A549 (cell line): ENCODE measurements at regions of chr19 and their contacts with region 1.

Region 1: DNA sequence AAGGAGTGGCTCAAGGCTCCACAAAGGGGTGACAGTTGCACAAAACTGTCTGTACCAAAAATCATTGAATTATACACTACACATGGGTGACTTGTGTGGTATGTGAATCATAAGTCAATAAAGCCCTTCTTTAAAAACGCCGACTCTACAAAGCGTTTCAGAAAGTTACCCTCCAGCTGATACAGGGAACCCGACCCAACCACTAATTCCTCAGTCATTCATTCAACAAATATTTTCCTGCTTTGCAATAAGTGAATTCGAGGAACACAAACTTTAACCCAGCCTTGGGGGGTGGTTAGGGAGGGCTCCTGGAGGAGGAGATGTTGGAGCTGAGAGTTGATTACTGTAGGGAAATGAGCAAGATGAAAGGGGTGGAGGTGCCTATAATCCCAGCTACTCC is 32.0 kb downstream of the LTBP4 start:
- DNase-seq: no peak
- ATAC-seq: 0 out of 6 replicates have a peak, but pooled peaks of 1 of the 2 experiments have one; percentile 21
- H3K4me3 ChIP-seq: no peak overlapping the region
- H3K27ac ChIP-seq: no peak overlapping the region
- H3K4me1 ChIP-seq: peaks cover 7% of the 10 kb centered on the region
- CTCF ChIP-seq: no peak
- EP300 ChIP-seq: no peak
- POLR2A ChIP-seq: no peak
- RAD21 ChIP-seq: no peak

Region 2: DNA sequence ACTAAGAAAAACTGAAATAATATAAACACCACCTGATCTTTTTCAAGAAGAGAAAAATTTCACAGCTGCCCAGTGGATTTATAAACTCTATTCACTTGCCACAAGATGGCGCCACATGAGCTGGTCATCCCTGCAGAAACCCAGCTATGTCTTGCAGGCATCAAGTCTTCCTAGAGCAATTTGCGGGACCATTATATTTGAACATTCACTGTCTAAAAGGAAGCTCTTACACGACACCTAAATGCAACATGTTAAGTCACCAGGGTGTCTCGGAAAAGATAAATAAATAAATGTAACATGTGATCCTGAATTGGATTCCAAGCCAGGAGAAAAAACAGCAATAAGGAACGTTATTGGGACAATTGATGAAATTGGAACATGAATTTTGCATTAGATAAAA is 327.8 kb before region 1 on chr19:
- CTCF ChIA-PET with region 1: interaction called, 32 read pairs
- POLR2A ChIA-PET with region 1: no interaction called
- DNase-seq: peak; percentile 96 to 99
- ATAC-seq: peak; percentile 94 to 96
- H3K4me3 ChIP-seq: no peak overlapping the region
- H3K27ac ChIP-seq: no peak overlapping the region
- H3K4me1 ChIP-seq: no peaks in the 10 kb centered on the region
- CTCF ChIP-seq: peak; percentile 100
- EP300 ChIP-seq: no peak
- POLR2A ChIP-seq: no peak
- RAD21 ChIP-seq: peak; percentile 95 to 98

Region 3: GRCh38 chr19:40497214-40497613 is 136.0 kb before region 1 on chr19:
- CTCF ChIA-PET with region 1: interaction called, 16 read pairs
- POLR2A ChIA-PET with region 1: no interaction called
- DNase-seq: no peak
- ATAC-seq: no peak; a peak in 1 of 6 replicates
- H3K4me3 ChIP-seq: no peak overlapping the region
- H3K27ac ChIP-seq: no peak overlapping the region
- H3K4me1 ChIP-seq: no peaks in the 10 kb centered on the region
- CTCF ChIP-seq: no peak
- EP300 ChIP-seq: no peak
- POLR2A ChIP-seq: no peak
- RAD21 ChIP-seq: no peak

Region 4: DNA sequence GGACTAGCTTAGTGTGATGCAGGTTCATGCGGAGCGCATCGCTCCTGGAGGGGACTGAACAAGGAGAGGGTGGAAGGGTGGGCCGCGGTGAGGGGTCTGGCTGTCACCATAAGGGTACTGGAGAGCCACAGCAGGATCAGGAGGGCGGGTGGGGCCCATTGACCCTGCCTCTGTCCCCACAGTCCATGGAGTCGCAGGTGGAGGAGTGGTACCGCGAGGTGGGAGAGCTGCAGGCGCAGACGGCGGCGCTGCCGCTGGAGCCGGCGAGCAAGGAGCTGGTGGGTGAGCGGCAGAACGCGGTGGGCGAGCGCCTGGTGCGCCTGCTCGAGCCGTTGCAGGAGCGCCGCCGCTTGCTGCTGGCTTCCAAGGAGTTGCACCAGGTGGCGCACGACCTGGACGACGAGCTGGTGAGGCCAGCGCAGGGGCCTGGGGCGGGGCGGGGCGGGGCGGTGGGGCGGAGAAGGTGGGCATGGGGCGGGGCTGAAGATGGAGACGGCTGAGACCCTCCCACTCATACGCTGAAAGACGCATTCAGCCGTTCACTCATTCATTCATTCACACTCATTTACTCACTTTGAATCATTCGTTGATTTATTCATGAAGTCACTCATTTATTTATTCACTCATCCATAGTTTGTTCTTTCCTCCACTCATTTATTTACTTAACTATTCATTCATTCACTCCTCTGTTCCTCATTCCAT is 84.0 kb before region 1 on chr19:
- CTCF ChIA-PET with region 1: interaction called, 109 read pairs
- POLR2A ChIA-PET with region 1: no interaction called
- DNase-seq: peak; percentile 92
- ATAC-seq: peak; percentile 97 to 99
- H3K4me3 ChIP-seq: peak overlapping the region; percentile 33
- H3K27ac ChIP-seq: peak overlapping the region; percentile 49 to 68; a peak in 4 of 6 replicates
- H3K4me1 ChIP-seq: peaks cover 5% of the 10 kb centered on the region
- CTCF ChIP-seq: peak; percentile 85
- EP300 ChIP-seq: no peak; a peak in 1 of 5 replicates
- POLR2A ChIP-seq: no peak
- RAD21 ChIP-seq: peak; percentile 63 to 90

Region 5: DNA sequence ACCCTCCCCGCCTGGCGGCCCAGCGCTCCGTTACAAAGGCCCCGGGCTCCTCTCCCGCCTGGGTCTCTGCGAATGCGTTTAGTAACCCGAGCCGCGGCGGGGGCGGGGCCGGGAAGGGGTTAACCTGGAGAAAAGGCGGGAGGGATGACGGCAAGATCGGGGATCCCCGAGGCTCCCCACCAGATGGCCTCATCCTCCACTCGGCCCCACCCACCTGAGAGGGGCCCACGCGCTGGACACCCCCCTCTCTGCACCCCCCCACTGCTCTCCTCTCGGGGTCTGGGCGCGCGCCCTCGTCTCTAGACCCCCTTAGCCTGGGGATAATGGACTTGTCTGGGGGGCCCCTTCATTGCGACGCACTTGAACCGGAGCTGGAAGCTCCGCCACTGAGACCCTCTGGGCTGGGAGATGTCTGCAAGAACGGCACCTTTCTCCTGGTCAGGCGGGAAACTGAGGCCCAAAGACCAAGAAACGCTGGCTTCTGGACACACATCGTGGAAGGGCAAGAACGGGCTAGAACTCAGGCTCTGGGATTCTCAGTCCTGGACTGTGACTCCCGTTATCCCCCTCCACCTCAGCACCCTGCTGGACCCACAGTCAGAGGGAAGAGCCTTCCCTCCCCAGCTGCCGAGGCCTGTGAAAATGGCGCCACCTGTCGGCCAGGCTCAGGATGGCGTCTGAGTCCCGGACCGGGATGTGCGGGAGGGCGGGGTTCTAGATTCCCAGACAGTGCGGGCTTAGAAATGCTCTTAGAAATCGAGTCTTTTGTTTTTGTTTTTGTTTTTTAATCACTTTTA is 34.9 kb before region 1 on chr19:
- CTCF ChIA-PET with region 1: interaction called, 409 read pairs
- POLR2A ChIA-PET with region 1: no interaction called
- DNase-seq: peak; percentile 97 to 99
- ATAC-seq: peak; percentile 49 to 76
- H3K4me3 ChIP-seq: peak overlapping the region; percentile 47
- H3K27ac ChIP-seq: peak overlapping the region; percentile 66 to 85
- H3K4me1 ChIP-seq: peaks cover 56% of the 10 kb centered on the region
- CTCF ChIP-seq: peak; percentile 100
- EP300 ChIP-seq: no peak
- POLR2A ChIP-seq: 0 out of 2 replicates have a peak, but pooled peaks have one; percentile 23
- RAD21 ChIP-seq: peak; percentile 100

Region 6: DNA sequence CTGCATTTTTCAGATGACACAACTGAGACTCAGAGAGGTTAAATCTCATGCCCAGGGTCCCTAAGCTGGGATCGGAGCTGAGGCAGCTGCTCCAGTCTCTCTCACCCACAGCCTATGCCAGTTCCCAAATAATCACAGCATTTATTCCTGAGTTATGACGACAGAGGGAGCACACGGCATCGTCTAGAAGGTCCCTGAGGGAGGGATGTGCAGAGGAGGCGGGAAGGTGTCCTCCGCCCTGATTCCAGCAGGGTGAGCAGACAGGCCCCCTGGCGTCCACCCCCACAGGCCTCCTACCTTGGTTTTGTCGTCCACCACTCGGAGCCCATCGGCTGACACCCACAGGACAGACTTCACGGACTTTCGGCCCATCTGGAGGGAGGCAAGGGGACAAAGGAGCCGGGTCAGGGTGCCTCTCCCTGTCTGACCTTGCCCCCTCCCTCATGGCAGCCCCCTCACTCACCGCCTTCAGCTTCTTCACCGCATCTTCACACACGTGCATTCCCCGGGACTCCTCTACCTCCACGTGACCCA is 49.3 kb after region 1 on chr19:
- CTCF ChIA-PET with region 1: interaction called, 12 read pairs
- POLR2A ChIA-PET with region 1: no interaction called
- DNase-seq: no peak
- ATAC-seq: no peak
- H3K4me3 ChIP-seq: no peak overlapping the region
- H3K27ac ChIP-seq: no peak overlapping the region
- H3K4me1 ChIP-seq: peaks cover 2% of the 10 kb centered on the region; the same call in 1 of the 3 replicates
- CTCF ChIP-seq: no peak
- EP300 ChIP-seq: no peak
- POLR2A ChIP-seq: no peak
- RAD21 ChIP-seq: no peak

Region 7: DNA sequence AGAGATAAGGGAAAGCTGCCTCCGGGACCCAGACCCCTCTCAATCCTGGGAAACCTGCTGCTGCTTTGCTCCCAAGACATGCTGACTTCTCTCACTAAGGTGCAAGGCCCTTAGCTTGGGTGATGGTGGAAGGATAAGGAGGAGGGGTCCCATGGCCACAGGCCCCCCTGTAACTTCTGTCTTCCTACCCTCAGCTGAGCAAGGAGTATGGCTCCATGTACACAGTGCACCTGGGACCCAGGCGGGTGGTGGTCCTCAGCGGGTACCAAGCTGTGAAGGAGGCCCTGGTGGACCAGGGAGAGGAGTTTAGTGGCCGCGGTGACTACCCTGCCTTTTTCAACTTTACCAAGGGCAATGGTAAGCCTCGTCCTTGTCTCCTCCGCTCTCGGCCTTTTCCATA is 483.1 kb after region 1 on chr19:
- CTCF ChIA-PET with region 1: no interaction called
- POLR2A ChIA-PET with region 1: no interaction called
- DNase-seq: no peak
- ATAC-seq: no peak
- H3K4me3 ChIP-seq: no peak overlapping the region
- H3K27ac ChIP-seq: no peak overlapping the region
- H3K4me1 ChIP-seq: no peaks in the 10 kb centered on the region
- CTCF ChIP-seq: no peak
- EP300 ChIP-seq: no peak
- POLR2A ChIP-seq: no peak
- RAD21 ChIP-seq: no peak